Sigmoid colon (tissue), 7 donors: ENCODE measurements at regions of chr17 and their contacts with region 1.

Region 1: DNA sequence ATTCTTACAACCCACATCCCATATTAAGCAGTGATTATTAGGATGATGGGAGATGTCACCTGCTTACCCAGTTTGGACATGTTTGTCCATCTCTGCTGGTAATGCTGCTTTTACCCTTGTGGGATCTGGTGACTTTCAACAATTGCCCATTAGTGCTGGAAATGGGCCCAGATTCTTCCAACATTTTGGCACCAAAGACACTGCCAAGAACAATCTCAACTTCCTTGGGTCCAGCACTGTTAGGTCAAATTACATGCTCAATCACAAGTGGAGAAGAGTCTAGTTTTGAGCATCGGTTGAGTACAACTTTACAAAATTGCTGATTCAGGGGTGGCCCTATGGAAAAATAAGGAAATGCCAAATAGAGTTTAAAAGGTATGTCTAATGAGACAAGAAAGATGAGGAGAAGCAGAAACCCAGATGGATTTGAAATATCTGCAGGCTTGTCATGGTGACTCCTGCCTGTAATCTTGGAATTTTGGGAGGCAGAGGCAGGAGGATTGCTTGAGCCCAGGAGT is 13.0 kb upstream of the ZFP3 start:
- DNase-seq: no peak
- H3K4me3 ChIP-seq: no peak overlapping the region
- H3K27ac ChIP-seq: no peak overlapping the region
- H3K4me1 ChIP-seq: no peaks in the 10 kb centered on the region
- H3K27me3 ChIP-seq: no peaks in the 10 kb centered on the region
- CTCF ChIP-seq: no peak
- EP300 ChIP-seq: no peak
- POLR2A ChIP-seq: no peak

Region 2: GRCh38 chr17:4747847-4748246 is 317.4 kb before region 1 on chr17:
- intact Hi-C with region 1: no loop called
- DNase-seq: no peak
- H3K4me3 ChIP-seq: no peak overlapping the region
- H3K27ac ChIP-seq: peak overlapping the region in 1 of 4 donors; percentile 34
- H3K4me1 ChIP-seq: peaks cover 0 to 9% (median 0%) of the 10 kb centered on the region in 4 donors
- H3K27me3 ChIP-seq: peaks cover 7 to 70% (median 27%) of the 10 kb centered on the region in 3 donors
- CTCF ChIP-seq: no peak
- EP300 ChIP-seq: no peak
- POLR2A ChIP-seq: no peak

Region 3: DNA sequence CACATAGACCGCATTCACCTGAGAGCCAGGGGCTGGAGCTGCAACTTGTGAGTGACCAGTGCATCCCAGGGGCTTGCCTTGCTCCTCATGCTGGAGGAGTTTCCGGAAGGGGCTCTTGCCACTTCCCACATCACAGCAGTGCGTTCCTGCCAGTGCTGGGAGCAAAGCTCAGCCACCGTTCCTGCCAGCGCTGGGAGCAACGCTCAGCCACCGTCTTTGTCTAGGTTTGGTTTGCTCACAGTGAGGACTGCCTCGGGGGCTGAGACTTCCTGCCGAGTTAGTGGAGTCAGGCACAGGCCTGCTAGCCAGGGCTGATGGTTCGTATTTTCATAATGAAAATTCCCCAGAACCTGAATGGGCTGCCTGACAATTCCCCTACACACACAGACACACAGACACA is 157.0 kb before region 1 on chr17:
- intact Hi-C with region 1: loop called (anchors 2 kb)
- DNase-seq: no peak
- H3K4me3 ChIP-seq: no peak overlapping the region
- H3K27ac ChIP-seq: peak overlapping the region in 2 of 4 donors; percentile 15 to 57
- H3K4me1 ChIP-seq: peaks cover 0 to 11% (median 5%) of the 10 kb centered on the region in 4 donors
- H3K27me3 ChIP-seq: peaks cover 0 to 15% (median 7%) of the 10 kb centered on the region in 3 donors
- CTCF ChIP-seq: no peak
- EP300 ChIP-seq: no peak
- POLR2A ChIP-seq: no peak

Region 4: GRCh38 chr17:5031365-5032082 is 33.8 kb before region 1 on chr17:
- intact Hi-C with region 1: loop called (anchors 1 kb)
- DNase-seq: peak; percentile 90
- H3K4me3 ChIP-seq: peak overlapping the region; percentile 24 to 56 (median 50)
- H3K27ac ChIP-seq: peak overlapping the region; percentile 3 to 62 (median 45)
- H3K4me1 ChIP-seq: peaks cover 0 to 16% (median 8%) of the 10 kb centered on the region in 4 donors
- H3K27me3 ChIP-seq: peaks cover 4 to 22% (median 6%) of the 10 kb centered on the region in 3 donors
- CTCF ChIP-seq: peak; percentile 67 to 87 (median 82)
- EP300 ChIP-seq: no peak
- POLR2A ChIP-seq: no peak